IMR-90 (cell line): ENCODE measurements at regions of chr6 and their contacts with region 1.

Region 1: DNA sequence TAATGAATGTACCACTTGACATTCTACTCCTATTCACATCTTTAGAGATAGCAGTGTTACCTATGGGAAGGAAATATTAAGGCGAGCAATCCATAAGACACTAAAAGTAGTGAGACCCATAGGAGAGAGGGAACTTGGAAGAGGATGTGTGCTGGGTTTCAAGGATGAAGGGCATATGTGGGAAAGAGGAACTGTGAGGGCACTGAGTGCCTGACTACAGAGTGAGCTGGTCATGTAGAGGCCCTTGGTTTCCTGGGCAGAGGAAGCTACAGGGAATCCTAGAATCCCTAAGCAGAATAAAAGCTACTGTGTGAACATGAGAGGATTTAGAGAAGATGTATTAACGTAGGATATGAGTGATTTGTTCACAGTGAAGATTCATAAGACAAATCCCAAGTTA is 262.8 kb downstream of the FARS2 start:
- DNase-seq: no peak
- ATAC-seq: no peak
- H3K4me3 ChIP-seq: no peak overlapping the region
- H3K27ac ChIP-seq: no peak overlapping the region
- H3K4me1 ChIP-seq: no peaks in the 10 kb centered on the region
- H3K27me3 ChIP-seq: no peaks in the 10 kb centered on the region
- CTCF ChIP-seq: no peak
- POLR2A ChIP-seq: no peak
- RAD21 ChIP-seq: no peak

Region 2: DNA sequence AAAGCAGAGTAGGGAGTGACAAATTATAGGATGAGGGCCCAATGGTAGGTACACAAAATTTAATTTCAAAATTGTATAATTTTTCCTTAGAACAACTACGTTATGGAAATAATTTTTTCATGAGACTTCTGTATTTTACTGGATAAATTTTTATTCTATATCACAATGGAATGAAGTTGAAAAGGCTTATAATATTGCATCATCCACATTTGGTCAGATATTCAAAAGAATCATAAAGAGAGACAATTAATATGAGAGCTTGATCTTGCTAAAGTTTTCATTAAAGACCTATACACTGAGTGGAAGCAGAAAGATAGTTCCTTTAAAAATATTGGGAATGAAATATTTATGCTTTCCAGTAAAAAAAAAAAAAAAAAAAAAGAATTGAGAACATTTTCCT is 20.0 kb before region 1 on chr6:
- CTCF ChIA-PET with region 1: no interaction called
- POLR2A ChIA-PET with region 1: no interaction called
- dilution Hi-C with region 1: no loop called
- in situ Hi-C with region 1: no loop called
- intact Hi-C with region 1: loop called (anchors 1 kb)
- DNase-seq: no peak
- ATAC-seq: no peak
- H3K4me3 ChIP-seq: no peak overlapping the region
- H3K27ac ChIP-seq: no peak overlapping the region
- H3K4me1 ChIP-seq: peaks cover 4% of the 10 kb centered on the region; the same call in 1 of the 2 replicates
- H3K27me3 ChIP-seq: no peaks in the 10 kb centered on the region
- CTCF ChIP-seq: no peak
- POLR2A ChIP-seq: no peak
- RAD21 ChIP-seq: no peak

Region 3: GRCh38 chr6:5590187-5590586 is 66.1 kb after region 1 on chr6:
- CTCF ChIA-PET with region 1: no interaction called
- POLR2A ChIA-PET with region 1: no interaction called
- dilution Hi-C with region 1: no loop called
- in situ Hi-C with region 1: no loop called
- intact Hi-C with region 1: no loop called
- DNase-seq: no peak
- ATAC-seq: no peak
- H3K4me3 ChIP-seq: no peak overlapping the region
- H3K27ac ChIP-seq: no peak overlapping the region
- H3K4me1 ChIP-seq: no peaks in the 10 kb centered on the region
- H3K27me3 ChIP-seq: no peaks in the 10 kb centered on the region
- CTCF ChIP-seq: no peak
- POLR2A ChIP-seq: no peak
- RAD21 ChIP-seq: no peak

Region 4: GRCh38 chr6:5626727-5627426 is 102.8 kb after region 1 on chr6:
- CTCF ChIA-PET with region 1: no interaction called
- POLR2A ChIA-PET with region 1: no interaction called
- dilution Hi-C with region 1: no loop called
- in situ Hi-C with region 1: no loop called
- intact Hi-C with region 1: no loop called
- DNase-seq: no peak
- ATAC-seq: no peak
- H3K4me3 ChIP-seq: no peak overlapping the region
- H3K27ac ChIP-seq: no peak overlapping the region
- H3K4me1 ChIP-seq: no peaks in the 10 kb centered on the region
- H3K27me3 ChIP-seq: no peaks in the 10 kb centered on the region
- CTCF ChIP-seq: no peak
- POLR2A ChIP-seq: no peak
- RAD21 ChIP-seq: no peak

Region 5: DNA sequence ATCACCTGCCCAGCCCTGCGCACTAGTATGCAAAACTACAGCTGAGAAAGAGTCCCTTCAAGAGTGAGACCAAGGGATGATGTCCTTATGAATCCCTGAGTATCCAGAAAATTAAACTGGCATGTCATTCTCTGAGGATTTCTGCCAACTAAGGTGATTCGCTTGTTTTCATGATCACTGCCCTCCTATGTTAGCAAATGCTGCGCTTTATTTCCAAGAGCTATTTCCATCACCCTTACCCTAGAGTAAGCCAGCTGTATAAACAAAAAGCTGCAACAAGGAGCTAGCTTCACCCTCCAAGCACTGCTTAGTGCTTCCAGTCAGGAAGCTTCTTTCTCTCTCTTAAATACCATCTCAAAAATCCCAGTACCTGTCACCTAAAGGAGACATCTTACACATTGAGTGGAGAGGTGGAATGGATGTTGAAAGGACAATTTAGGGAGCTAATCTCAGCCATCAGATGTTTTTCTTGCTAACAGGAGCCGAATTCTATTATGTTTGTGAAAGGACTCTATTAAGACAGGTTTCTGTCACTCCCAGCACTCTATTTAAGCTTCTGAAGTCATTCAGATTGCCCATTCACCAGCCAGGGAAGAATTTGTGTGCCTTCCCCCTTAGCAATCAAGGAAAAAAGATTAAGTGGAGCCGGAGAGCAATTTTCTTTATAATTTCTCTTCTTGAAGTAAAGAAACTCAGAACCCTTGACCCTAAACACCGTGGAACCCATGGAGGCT is 160.4 kb after region 1 on chr6:
- CTCF ChIA-PET with region 1: no interaction called
- POLR2A ChIA-PET with region 1: no interaction called
- dilution Hi-C with region 1: no loop called
- in situ Hi-C with region 1: no loop called
- intact Hi-C with region 1: no loop called
- DNase-seq: peak; percentile 67
- ATAC-seq: peak; percentile 57
- H3K4me3 ChIP-seq: no peak overlapping the region
- H3K27ac ChIP-seq: no peak overlapping the region
- H3K4me1 ChIP-seq: no peaks in the 10 kb centered on the region
- H3K27me3 ChIP-seq: no peaks in the 10 kb centered on the region
- CTCF ChIP-seq: no peak
- POLR2A ChIP-seq: no peak
- RAD21 ChIP-seq: no peak

Region 6: DNA sequence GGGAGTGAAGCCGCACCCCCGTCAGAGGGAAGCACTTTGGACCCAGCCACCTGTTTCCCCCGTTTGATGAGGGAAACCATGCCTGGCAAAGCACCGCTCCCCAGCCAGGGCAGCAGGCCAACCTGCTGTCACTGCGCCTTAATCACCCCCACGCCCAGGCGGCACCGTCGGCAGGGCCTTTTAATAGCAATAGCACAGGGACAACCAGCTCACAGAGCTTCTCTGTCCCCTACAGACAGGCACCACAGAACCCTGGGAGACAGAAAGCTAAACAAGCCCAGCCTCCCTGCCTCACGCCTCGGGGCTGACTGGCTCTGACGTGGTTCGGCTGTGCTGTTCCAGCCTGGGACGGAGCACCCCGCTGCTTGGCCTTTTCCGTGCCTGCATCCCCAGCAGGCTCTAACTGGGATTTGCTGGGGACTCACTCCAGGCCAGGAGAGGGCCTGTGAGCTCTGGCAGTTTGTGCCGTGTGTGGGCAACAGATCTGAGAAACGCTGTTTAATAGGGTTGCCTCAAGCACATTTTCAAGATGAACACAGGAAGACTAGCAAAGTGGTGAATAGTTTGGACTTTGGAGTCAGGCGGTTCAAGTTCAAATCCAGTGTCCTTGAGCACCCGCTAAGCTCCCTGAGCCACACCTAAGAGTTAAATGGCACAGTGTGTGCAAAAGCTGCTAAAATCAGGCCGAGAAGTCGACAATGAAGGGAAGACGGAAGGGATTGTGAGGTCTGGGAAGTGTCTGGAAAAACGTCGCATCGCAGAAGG is 258.9 kb after region 1 on chr6:
- CTCF ChIA-PET with region 1: no interaction called
- POLR2A ChIA-PET with region 1: no interaction called
- dilution Hi-C with region 1: no loop called
- in situ Hi-C with region 1: no loop called
- intact Hi-C with region 1: no loop called
- DNase-seq: peak; percentile 22
- ATAC-seq: peak; percentile 57
- H3K4me3 ChIP-seq: no peak overlapping the region
- H3K27ac ChIP-seq: no peak overlapping the region
- H3K4me1 ChIP-seq: no peaks in the 10 kb centered on the region
- H3K27me3 ChIP-seq: no peaks in the 10 kb centered on the region; the same call in 1 of the 2 replicates
- CTCF ChIP-seq: no peak
- POLR2A ChIP-seq: no peak
- RAD21 ChIP-seq: no peak